ENCODE measurements at regions of chr1 and their contacts with region 1.

Region 1: GRCh38 chr1:222009105-222009730 is 267.3 kb upstream of the DUSP10 start:
- DNase-seq: peak in 1 of 2 donors; percentile 67
- ATAC-seq: peak in 2 of 3 donors; percentile 72 to 85
- H3K4me3 ChIP-seq: no peak overlapping the region
- H3K4me3 Mint-ChIP-seq: peak overlapping the region; percentile 3
- H3K27ac ChIP-seq: no peak overlapping the region
- H3K27ac Mint-ChIP-seq: peak overlapping the region in 1 of 2 donors; percentile 37
- H3K4me1 ChIP-seq: peaks cover 4% of the 10 kb centered on the region
- H3K4me1 Mint-ChIP-seq: peaks cover 4 to 6% of the 10 kb centered on the region in 2 donors
- H3K27me3 ChIP-seq: no peaks in the 10 kb centered on the region
- H3K27me3 Mint-ChIP-seq: no peaks in the 10 kb centered on the region
- CTCF ChIP-seq: peak; percentile 59

Region 2: DNA sequence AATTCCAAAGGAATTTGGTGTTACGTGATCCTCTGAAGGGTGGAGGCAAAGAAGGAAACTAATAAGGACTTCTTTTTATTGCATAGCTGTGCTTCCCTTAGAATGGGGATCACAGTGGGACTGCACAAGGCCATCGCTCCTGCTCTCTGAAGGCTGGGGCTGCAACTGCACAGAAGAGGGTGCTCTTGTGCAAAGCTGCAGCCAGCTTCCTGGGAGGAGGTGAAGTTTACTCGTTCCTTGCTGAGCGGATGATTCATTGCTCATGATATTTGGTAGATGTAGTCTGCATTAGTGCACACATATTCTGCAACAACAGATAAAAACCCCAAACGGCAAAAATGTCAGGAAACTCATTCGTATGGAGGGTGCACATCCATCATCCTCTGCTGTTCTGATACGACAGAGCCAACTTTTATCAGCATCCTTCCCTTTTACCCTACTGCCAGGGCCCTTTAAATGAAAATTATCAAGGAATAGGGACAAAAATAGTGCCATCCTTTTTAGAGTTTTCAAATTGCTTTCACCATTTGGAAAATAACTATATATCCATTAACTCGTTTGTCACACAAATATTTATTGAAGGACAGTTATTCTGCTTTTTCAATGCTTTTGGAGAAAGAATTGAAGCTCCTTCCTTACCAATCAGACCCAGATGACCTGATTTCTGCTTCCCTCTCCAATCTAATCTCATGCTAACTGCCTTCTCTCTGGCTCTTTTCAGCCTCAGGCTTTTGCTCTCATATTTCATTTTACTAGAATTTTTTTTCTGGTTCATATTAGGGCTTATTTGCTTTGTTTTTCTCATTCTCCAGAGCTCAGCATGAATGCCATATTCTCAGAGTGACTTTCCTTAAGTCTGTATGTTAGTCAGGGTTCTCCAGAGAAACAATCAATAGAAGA is 530.9 kb before region 1 on chr1:
- intact Hi-C with region 1: loop called (anchors 1 kb)
- DNase-seq: peak; percentile 42 to 71
- ATAC-seq: peak; percentile 72 to 98 (median 91)
- H3K4me3 ChIP-seq: no peak overlapping the region
- H3K4me3 Mint-ChIP-seq: no peak overlapping the region
- H3K27ac ChIP-seq: no peak overlapping the region
- H3K27ac Mint-ChIP-seq: no peak overlapping the region
- H3K4me1 ChIP-seq: no peaks in the 10 kb centered on the region
- H3K4me1 Mint-ChIP-seq: no peaks in the 10 kb centered on the region
- H3K27me3 ChIP-seq: no peaks in the 10 kb centered on the region
- H3K27me3 Mint-ChIP-seq: peaks cover 4 to 12% of the 10 kb centered on the region in 2 donors
- CTCF ChIP-seq: peak; percentile 71

Region 3: DNA sequence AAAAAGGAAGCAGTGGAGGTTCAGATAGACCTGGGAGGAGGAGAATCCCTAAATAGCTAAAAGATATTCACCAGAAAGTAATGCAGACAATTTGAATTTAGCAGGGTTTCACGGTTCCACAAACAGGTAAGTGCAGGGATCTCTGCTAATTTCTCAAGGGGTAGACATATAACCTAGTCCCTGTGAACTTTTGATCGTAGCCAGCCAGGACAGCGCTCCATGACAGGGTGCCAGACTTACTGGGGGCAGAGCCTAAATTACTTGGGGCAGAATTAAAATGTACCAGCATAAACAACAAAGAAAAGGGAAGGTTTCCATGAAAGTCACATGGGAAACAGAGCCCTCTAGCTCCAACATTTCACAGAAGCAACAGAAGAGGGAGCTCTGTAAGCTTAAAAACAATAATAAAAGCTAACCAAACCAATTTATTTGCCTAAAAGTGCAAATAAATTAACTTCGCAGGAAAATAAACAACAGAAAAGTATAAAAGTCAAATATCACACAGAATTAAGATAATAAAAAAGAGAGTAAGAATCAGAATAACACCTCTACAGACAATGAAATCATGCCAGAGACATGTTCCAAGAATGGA is 465.6 kb before region 1 on chr1:
- intact Hi-C with region 1: loop called (anchors 5 kb)
- DNase-seq: peak in 1 of 2 donors; percentile 28
- ATAC-seq: no peak
- H3K4me3 ChIP-seq: no peak overlapping the region
- H3K4me3 Mint-ChIP-seq: no peak overlapping the region
- H3K27ac ChIP-seq: no peak overlapping the region
- H3K27ac Mint-ChIP-seq: no peak overlapping the region
- H3K4me1 ChIP-seq: no peaks in the 10 kb centered on the region
- H3K4me1 Mint-ChIP-seq: no peaks in the 10 kb centered on the region
- H3K27me3 ChIP-seq: no peaks in the 10 kb centered on the region
- H3K27me3 Mint-ChIP-seq: peaks cover 3 to 10% of the 10 kb centered on the region in 2 donors
- CTCF ChIP-seq: peak; percentile 46

Region 4: DNA sequence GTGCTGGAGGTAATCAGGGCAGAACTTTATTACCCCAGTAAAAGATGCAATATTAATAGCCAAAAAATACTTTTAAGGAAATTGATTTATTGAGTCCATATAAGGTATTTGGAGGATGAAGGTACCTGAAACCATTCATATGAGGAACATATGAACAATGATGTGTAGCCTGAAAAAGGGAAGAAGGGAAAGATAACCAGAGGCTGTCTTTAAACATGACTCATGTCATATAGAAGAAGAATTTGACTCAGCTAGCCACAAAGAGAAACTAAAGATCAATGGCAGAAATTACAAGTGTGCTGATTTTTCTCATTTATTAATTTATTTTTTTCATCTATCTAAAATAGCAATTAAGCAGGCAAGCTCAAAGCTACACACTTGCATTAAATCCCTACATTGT is 131.1 kb before region 1 on chr1:
- intact Hi-C with region 1: no loop called
- DNase-seq: no peak
- ATAC-seq: no peak
- H3K4me3 ChIP-seq: no peak overlapping the region
- H3K4me3 Mint-ChIP-seq: no peak overlapping the region
- H3K27ac ChIP-seq: no peak overlapping the region
- H3K27ac Mint-ChIP-seq: no peak overlapping the region
- H3K4me1 ChIP-seq: no peaks in the 10 kb centered on the region
- H3K4me1 Mint-ChIP-seq: no peaks in the 10 kb centered on the region
- H3K27me3 ChIP-seq: no peaks in the 10 kb centered on the region
- H3K27me3 Mint-ChIP-seq: peaks cover 3 to 7% of the 10 kb centered on the region in 2 donors
- CTCF ChIP-seq: no peak